Heart left ventricle (tissue), 16 donors: ENCODE measurements at regions of chr3 and their contacts with region 1.

Region 1: GRCh38 chr3:188947401-188948280 is 224.1 kb upstream of the TPRG1 start:
- DNase-seq: peak; percentile 91 to 97 (median 95)
- ATAC-seq: peak; percentile 90 to 93 (median 91)
- H3K4me3 ChIP-seq: peak overlapping the region in 11 of 12 donors; percentile 14 to 58 (median 51)
- H3K27ac ChIP-seq: peak overlapping the region; percentile 90 to 99 (median 96)
- H3K4me1 ChIP-seq: peaks cover 0 to 95% (median 38%) of the 10 kb centered on the region in 12 donors
- H3K27me3 ChIP-seq: no peaks in the 10 kb centered on the region
- CTCF ChIP-seq: peak in 9 of 12 donors; percentile 14 to 50 (median 35)
- POLR2A ChIP-seq: peak in 1 of 2 donors; percentile 73

Region 2: DNA sequence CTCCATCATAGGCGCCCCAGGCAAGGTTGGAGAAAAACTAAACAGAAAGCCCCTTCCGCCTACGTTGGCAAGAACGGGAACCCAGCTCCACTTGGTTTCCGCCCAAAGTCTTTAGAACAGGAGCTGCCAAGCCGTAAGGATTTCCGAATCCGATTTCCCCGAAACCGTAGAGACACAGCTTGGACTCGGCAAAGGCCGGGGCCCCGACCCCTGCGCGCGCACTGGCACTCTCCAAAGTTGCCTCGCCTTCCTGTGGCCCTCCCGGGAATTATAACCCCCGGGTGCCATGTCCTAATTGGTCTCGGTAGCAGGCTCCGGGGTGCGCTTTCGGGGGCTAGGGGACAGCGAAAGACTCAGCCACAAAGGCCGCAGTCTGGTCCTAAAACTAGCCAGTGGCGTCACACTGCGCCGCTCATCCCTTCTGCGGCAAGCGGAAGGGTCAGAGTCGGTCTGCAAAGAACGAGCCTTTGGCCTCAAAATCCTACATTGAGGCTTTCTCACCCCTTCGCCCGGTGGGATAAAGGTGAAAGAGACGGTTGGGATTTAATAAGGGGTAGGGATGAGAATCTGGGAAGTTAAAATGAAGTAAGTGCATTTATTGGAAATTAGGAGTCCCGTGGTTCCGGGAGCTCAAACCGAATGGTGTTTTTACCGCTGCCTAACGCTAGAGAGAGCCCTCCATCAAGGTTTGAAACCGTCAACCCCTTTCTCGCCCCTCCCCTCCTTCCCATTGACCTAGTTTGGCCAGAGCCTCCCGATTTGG is 1209.1 kb before region 1 on chr3:
- intact Hi-C with region 1: loop called in 3 of 10 experiments (anchors 2 kb)
- DNase-seq: peak; percentile 75 to 95 (median 93)
- ATAC-seq: peak; percentile 65 to 78 (median 72)
- H3K4me3 ChIP-seq: peak overlapping the region; percentile 15 to 89 (median 72)
- H3K27ac ChIP-seq: peak overlapping the region; percentile 94 to 100 (median 98)
- H3K4me1 ChIP-seq: peaks cover 0 to 58% (median 36%) of the 10 kb centered on the region in 12 donors
- H3K27me3 ChIP-seq: no peaks in the 10 kb centered on the region
- CTCF ChIP-seq: peak; percentile 50 to 88 (median 74)
- POLR2A ChIP-seq: peak in 1 of 2 donors; percentile 45

Region 3: GRCh38 chr3:188154014-188154808 is 793.4 kb before region 1 on chr3 and contains the start of gene LPP:
- intact Hi-C with region 1: loop called in 5 of 10 experiments (anchors 5 to 10 kb)
- DNase-seq: peak; percentile 83 to 92 (median 86)
- ATAC-seq: peak; percentile 67 to 93 (median 82)
- H3K4me3 ChIP-seq: peak within 1 kb of the TSS; percentile 68 to 94 (median 86)
- H3K27ac ChIP-seq: peak within 1 kb of the TSS; percentile 90 to 99 (median 97)
- H3K4me1 ChIP-seq: peaks cover 0 to 62% (median 41%) of the 10 kb centered on the region in 12 donors
- H3K27me3 ChIP-seq: no peaks in the 10 kb centered on the region
- CTCF ChIP-seq: peak in 2 of 12 donors; percentile 7 to 25
- POLR2A ChIP-seq: no peak
- total RNA-seq, gene LPP: 76.6 to 178 (median 111) TPM

Region 4: DNA sequence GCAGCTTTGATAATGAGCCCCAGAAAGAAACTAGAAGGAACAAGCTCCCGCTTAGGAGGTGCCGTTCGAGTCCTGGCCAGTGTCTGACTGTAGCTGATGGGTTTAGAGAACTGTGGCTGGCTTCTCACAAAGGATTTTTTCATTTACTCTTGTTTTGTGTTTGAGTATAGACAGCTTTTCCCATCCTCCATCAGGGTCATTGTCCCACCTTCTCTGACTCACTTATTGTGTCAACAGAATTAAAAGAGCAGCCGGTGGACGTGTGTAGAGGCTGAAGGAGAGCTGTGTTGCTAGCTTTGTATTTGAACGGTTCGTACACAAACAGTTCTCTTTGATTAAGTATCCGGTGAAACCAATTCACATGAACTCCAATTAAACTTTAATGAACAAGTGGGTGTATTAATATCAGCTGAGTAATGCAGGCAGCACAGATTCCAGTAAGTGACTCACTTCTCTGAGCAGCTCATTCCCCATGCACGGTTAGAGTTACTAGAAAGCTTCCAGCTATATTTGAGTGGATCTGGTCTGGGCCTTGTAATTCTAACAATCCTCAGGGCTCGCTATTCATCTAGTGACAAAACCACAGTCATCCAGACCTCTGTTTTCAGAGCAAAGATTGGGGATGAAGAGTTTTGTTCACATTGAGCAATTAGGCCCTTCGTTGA is 652.7 kb before region 1 on chr3:
- intact Hi-C with region 1: loop called in 1 of 10 experiments (anchors 10 kb)
- DNase-seq: peak in 1 of 5 donors; percentile 52
- ATAC-seq: peak; percentile 77 to 92 (median 90)
- H3K4me3 ChIP-seq: no peak overlapping the region
- H3K27ac ChIP-seq: peak overlapping the region; percentile 39 to 89 (median 78)
- H3K4me1 ChIP-seq: peaks cover 0 to 92% (median 51%) of the 10 kb centered on the region in 12 donors
- H3K27me3 ChIP-seq: no peaks in the 10 kb centered on the region
- CTCF ChIP-seq: no peak
- POLR2A ChIP-seq: no peak

Region 5: GRCh38 chr3:188348435-188349244 is 599.0 kb before region 1 on chr3:
- intact Hi-C with region 1: loop called in 3 of 10 experiments (anchors 5 to 10 kb)
- DNase-seq: peak; percentile 66 to 91 (median 84)
- ATAC-seq: peak; percentile 67 to 77 (median 74)
- H3K4me3 ChIP-seq: no peak overlapping the region
- H3K27ac ChIP-seq: peak overlapping the region; percentile 41 to 77 (median 64)
- H3K4me1 ChIP-seq: peaks cover 6 to 65% (median 41%) of the 10 kb centered on the region in 12 donors
- H3K27me3 ChIP-seq: no peaks in the 10 kb centered on the region
- CTCF ChIP-seq: no peak
- POLR2A ChIP-seq: no peak

Region 6: GRCh38 chr3:188584162-188584529 is 363.5 kb before region 1 on chr3:
- intact Hi-C with region 1: loop called in 1 of 10 experiments (anchors 10 kb)
- DNase-seq: no peak
- ATAC-seq: peak in 2 of 4 donors; percentile 66 to 71
- H3K4me3 ChIP-seq: no peak overlapping the region
- H3K27ac ChIP-seq: peak overlapping the region in 3 of 12 donors; percentile 14 to 60 (median 52)
- H3K4me1 ChIP-seq: peaks cover 0 to 66% (median 14%) of the 10 kb centered on the region in 12 donors
- H3K27me3 ChIP-seq: no peaks in the 10 kb centered on the region
- CTCF ChIP-seq: no peak
- POLR2A ChIP-seq: no peak

Region 7: GRCh38 chr3:188900421-188900951 is 47.2 kb before region 1 on chr3:
- intact Hi-C with region 1: loop called in 1 of 10 experiments (anchors 5 kb)
- DNase-seq: no peak
- ATAC-seq: peak in 3 of 4 donors; percentile 79 to 91 (median 82)
- H3K4me3 ChIP-seq: no peak overlapping the region
- H3K27ac ChIP-seq: peak overlapping the region in 3 of 12 donors; percentile 6 to 85 (median 35)
- H3K4me1 ChIP-seq: peaks cover 0 to 36% (median 13%) of the 10 kb centered on the region in 12 donors
- H3K27me3 ChIP-seq: no peaks in the 10 kb centered on the region
- CTCF ChIP-seq: no peak
- POLR2A ChIP-seq: no peak

Region 8: DNA sequence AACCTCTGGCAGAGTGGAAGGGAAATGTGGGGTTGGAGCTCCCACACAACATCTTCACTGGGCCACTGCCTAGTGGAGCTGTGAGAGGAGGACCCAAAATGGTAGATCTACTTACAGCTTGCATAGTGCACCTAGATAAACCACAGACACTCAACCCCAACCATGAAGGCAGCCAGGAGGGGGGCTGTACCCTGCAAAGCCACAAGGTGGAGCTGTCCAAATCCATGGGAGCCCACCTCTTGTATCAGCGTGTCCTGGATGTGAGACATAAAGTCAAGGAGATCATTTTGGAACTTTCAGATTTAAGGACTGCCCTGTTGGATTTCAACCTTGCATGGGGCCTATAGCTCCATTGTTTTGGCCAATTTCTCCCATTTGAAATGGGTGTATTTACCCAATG is 704.4 kb after region 1 on chr3:
- intact Hi-C with region 1: no loop called
- DNase-seq: no peak
- ATAC-seq: no peak
- H3K4me3 ChIP-seq: no peak overlapping the region
- H3K27ac ChIP-seq: no peak overlapping the region
- H3K4me1 ChIP-seq: no peaks in the 10 kb centered on the region
- H3K27me3 ChIP-seq: no peaks in the 10 kb centered on the region
- CTCF ChIP-seq: peak in 8 of 12 donors; percentile 5 to 38 (median 20)
- POLR2A ChIP-seq: no peak